ENCODE measurements at regions of chr17 and their contacts with region 1.

Region 1: GRCh38 chr17:32486111-32486700 is 587 bp upstream of the CDK5R1 start:
- DNase-seq: peak; percentile 91
- CTCF ChIP-seq: no peak

Region 2: DNA sequence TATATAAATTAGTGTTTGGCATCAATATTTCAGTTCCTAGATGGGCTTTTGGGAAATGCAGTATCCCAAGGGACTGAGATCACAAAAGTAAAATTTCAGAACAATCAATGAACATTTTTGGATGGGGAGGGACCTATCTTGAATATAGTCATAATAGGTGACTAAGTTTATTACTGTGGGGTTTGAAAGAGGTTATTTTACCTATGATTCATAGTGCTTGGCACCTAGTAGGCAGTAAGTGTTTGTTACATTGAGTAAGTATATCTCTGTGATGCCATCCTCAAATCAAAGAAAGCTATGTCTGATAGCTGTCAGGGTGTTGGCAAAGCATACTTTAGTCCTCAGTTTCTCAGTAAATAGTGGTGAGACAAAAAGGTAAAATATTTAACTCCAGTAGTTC is 99.4 kb before region 1 on chr17:
- CTCF ChIA-PET with region 1: no interaction called
- POLR2A ChIA-PET with region 1: no interaction called
- DNase-seq: no peak
- CTCF ChIP-seq: no peak

Region 3: DNA sequence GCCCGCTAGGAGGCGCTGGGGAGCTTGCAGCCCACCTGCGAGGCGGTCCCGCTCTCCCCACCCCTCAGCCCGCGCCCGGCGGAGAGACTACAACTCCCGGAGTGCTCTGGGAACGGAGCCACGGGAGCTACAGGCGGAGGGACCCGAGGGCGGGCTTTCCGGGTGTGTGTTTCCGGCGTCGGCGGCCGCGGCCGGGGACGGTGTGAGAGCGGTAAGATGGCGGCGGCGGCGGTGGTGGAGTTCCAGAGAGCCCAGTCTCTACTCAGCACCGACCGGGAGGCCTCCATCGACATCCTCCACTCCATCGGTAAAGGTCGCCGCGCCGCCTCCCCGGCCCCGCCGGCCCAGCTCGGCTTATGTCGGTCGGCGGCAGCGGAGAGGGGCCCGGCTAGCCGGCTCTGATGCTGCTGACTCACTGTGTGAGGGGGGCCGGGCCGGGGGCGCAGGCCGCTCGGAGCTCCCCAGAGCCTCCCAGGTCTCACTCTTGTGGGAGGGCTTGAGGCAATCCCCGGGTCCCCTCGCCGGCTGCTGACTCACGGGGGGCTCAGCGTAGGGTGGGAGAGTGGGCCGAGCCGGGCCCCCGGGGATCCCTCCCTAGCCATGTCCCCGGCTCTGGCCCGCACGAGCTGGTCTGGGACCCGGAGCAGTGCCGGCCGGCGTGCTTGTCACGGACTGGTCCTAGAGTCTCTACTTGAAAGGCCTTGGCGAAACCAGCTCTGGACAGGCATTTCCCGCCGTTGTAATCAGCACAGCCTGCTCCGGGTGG is 41.7 kb before region 1 on chr17 and contains the start of gene PSMD11:
- CTCF ChIA-PET with region 1: interaction called, 15 read pairs
- POLR2A ChIA-PET with region 1: no interaction called
- DNase-seq: peak; percentile 99
- CTCF ChIP-seq: peak; percentile 89

Region 4: GRCh38 chr17:32516940-32517701 is 30.9 kb after region 1 on chr17:
- CTCF ChIA-PET with region 1: interaction called, 13 read pairs
- POLR2A ChIA-PET with region 1: interaction called, 6 read pairs
- DNase-seq: peak; percentile 49
- CTCF ChIP-seq: no peak

Region 5: DNA sequence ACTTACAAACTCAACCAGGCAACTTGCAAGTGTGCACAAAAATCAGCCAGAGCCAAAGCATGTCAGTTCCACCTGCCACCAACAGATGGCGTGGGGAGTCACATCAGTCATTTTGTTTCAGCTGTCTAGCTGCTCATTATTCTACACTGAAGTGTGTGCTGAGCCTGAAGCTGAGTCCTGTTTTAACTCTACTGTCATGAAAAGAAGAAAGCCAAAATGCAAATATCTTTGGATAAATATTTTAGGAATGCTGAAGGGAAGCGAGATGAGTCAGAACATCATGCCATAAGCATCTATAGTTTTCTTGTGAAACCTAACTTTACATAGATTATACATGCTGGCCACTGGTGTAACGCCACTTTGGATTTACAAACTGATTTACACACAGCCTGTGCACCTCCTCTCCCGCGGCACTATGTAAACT is 173.2 kb after region 1 on chr17:
- CTCF ChIA-PET with region 1: interaction called, 12 read pairs
- POLR2A ChIA-PET with region 1: no interaction called
- DNase-seq: peak; percentile 79
- CTCF ChIP-seq: peak; percentile 75

Region 6: DNA sequence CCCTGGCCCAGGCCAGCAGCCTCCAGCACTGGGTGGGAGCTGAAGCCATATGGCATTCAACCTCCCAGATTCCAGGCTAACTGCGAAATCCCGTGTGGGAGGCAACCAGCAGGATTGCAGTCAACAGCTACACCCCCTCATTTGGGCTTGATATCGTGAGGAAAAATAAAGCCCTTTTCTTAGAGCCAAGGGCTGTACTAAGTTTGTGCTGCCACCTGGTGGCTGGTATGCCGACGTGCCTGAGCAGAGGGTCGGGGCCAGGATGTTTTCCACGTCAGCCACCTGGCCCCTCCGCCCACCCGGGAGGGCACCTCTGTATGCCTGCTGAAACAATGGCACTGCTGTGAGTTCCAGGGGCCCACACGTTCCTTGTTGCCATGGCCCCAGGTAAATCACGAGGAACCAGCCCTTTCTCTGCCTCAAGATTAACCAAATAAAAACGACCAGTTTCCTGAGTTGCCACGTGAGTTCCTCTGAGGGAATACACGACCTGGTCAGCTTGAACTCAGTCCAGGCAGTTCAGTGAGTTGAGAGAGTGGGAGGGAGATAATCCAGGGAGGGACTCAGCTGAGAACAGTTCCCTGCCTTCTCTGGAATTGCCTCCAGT is 450.8 kb after region 1 on chr17:
- CTCF ChIA-PET with region 1: interaction called, 21 read pairs
- POLR2A ChIA-PET with region 1: no interaction called
- DNase-seq: peak; percentile 82
- CTCF ChIP-seq: peak; percentile 88